Activated CD4-positive, alpha-beta T cell treated with anti-CD3 and anti-CD28 coated beads for 36 hours (primary cell): ENCODE measurements at regions of chr15 and their contacts with region 1.

Region 1: GRCh38 chr15:66251790-66252684 is 1.5 kb downstream of the MEGF11 start:
- DNase-seq: peak; percentile 73
- ATAC-seq: peak; percentile 75
- H3K4me3 Mint-ChIP-seq: peak overlapping the region; percentile 53
- H3K27ac Mint-ChIP-seq: no peak overlapping the region
- H3K4me1 Mint-ChIP-seq: peaks cover 6% of the 10 kb centered on the region
- H3K27me3 Mint-ChIP-seq: peaks cover 58% of the 10 kb centered on the region

Region 2: GRCh38 chr15:66287461-66288057 is 35.5 kb after region 1 on chr15:
- CTCF ChIA-PET with region 1: interaction called, 7 read pairs
- POLR2A ChIA-PET with region 1: no interaction called
- intact Hi-C with region 1: loop called (anchors 1 to 5 kb)
- DNase-seq: no peak
- ATAC-seq: no peak
- H3K4me3 Mint-ChIP-seq: no peak overlapping the region
- H3K27ac Mint-ChIP-seq: no peak overlapping the region
- H3K4me1 Mint-ChIP-seq: peaks cover 25% of the 10 kb centered on the region
- H3K27me3 Mint-ChIP-seq: no peaks in the 10 kb centered on the region

Region 3: GRCh38 chr15:66293419-66294156 is 41.6 kb after region 1 on chr15 and contains the start of gene DIS3L:
- CTCF ChIA-PET with region 1: interaction called, 7 read pairs
- POLR2A ChIA-PET with region 1: no interaction called
- intact Hi-C with region 1: loop called in 1 of 2 experiments (anchors 5 kb)
- DNase-seq: peak; percentile 75
- ATAC-seq: peak; percentile 80
- H3K4me3 Mint-ChIP-seq: peak within 1 kb of the TSS; percentile 86
- H3K27ac Mint-ChIP-seq: peak within 1 kb of the TSS; percentile 90
- H3K4me1 Mint-ChIP-seq: peaks cover 49% of the 10 kb centered on the region
- H3K27me3 Mint-ChIP-seq: no peaks in the 10 kb centered on the region
- total RNA-seq, gene DIS3L: 24.6 to 25.9 TPM